ENCODE measurements at regions of chr21 and their contacts with region 1.

Region 1: GRCh38 chr21:44817506-44817880 is 369 bp downstream of the SUMO3 start:
- DNase-seq: peak; percentile 85 to 96 (median 91)
- ATAC-seq: peak; percentile 92
- H3K4me3 ChIP-seq: peak overlapping the region; percentile 46 to 58
- H3K4me3 Mint-ChIP-seq: peak overlapping the region; percentile 69
- H3K27ac ChIP-seq: peak overlapping the region in 1 of 2 experiments; percentile 76
- H3K27ac Mint-ChIP-seq: no peak overlapping the region
- H3K4me1 ChIP-seq: peaks cover 18% of the 10 kb centered on the region
- H3K4me1 Mint-ChIP-seq: peaks cover 9% of the 10 kb centered on the region
- H3K27me3 ChIP-seq: no peaks in the 10 kb centered on the region
- H3K27me3 Mint-ChIP-seq: no peaks in the 10 kb centered on the region
- CTCF ChIP-seq: no peak

Region 2: GRCh38 chr21:42973991-42974831 is 1843.3 kb before region 1 on chr21 and contains the start of gene PKNOX1:
- CTCF ChIA-PET with region 1: no interaction called
- POLR2A ChIA-PET with region 1: no interaction called
- intact Hi-C with region 1: loop called in 1 of 2 experiments (anchors 5 kb)
- DNase-seq: peak; percentile 98 to 100 (median 99)
- ATAC-seq: peak; percentile 85
- H3K4me3 ChIP-seq: peak within 1 kb of the TSS; percentile 83 to 87
- H3K4me3 Mint-ChIP-seq: peak within 1 kb of the TSS; percentile 91
- H3K27ac ChIP-seq: peak within 1 kb of the TSS; percentile 81 to 98
- H3K27ac Mint-ChIP-seq: peak within 1 kb of the TSS; percentile 94
- H3K4me1 ChIP-seq: peaks cover 18% of the 10 kb centered on the region
- H3K4me1 Mint-ChIP-seq: peaks cover 22% of the 10 kb centered on the region
- H3K27me3 ChIP-seq: no peaks in the 10 kb centered on the region
- H3K27me3 Mint-ChIP-seq: no peaks in the 10 kb centered on the region
- CTCF ChIP-seq: no peak
- total RNA-seq, gene PKNOX1: 10.3 to 11.1 TPM

Region 3: GRCh38 chr21:44338971-44339910 is 478.3 kb before region 1 on chr21 and contains the start of gene CFAP410:
- CTCF ChIA-PET with region 1: interaction called, 3 read pairs
- POLR2A ChIA-PET with region 1: no interaction called
- intact Hi-C with region 1: loop called (anchors 1 to 5 kb)
- DNase-seq: peak; percentile 89 to 98 (median 95)
- ATAC-seq: peak; percentile 84
- H3K4me3 ChIP-seq: peak within 1 kb of the TSS; percentile 73 to 76
- H3K4me3 Mint-ChIP-seq: peak within 1 kb of the TSS; percentile 94
- H3K27ac ChIP-seq: peak within 1 kb of the TSS; percentile 92 to 96
- H3K27ac Mint-ChIP-seq: peak within 1 kb of the TSS; percentile 99
- H3K4me1 ChIP-seq: peaks cover 17% of the 10 kb centered on the region
- H3K4me1 Mint-ChIP-seq: peaks cover 32% of the 10 kb centered on the region
- H3K27me3 ChIP-seq: no peaks in the 10 kb centered on the region
- H3K27me3 Mint-ChIP-seq: no peaks in the 10 kb centered on the region
- CTCF ChIP-seq: no peak
- total RNA-seq, gene CFAP410: 69.7 to 70.5 TPM

Region 4: GRCh38 chr21:44801468-44802395 is 15.8 kb before region 1 on chr21 and contains the start of gene UBE2G2:
- CTCF ChIA-PET with region 1: interaction called, 8 read pairs
- POLR2A ChIA-PET with region 1: interaction called, 3 read pairs
- intact Hi-C with region 1: loop called (anchors 1 kb)
- DNase-seq: peak; percentile 70 to 91 (median 85)
- ATAC-seq: peak; percentile 88
- H3K4me3 ChIP-seq: peak within 1 kb of the TSS; percentile 76 to 95
- H3K4me3 Mint-ChIP-seq: peak within 1 kb of the TSS; percentile 95
- H3K27ac ChIP-seq: peak within 1 kb of the TSS; percentile 64 to 71
- H3K27ac Mint-ChIP-seq: peak within 1 kb of the TSS; percentile 92
- H3K4me1 ChIP-seq: peaks cover 20% of the 10 kb centered on the region
- H3K4me1 Mint-ChIP-seq: peaks cover 47% of the 10 kb centered on the region
- H3K27me3 ChIP-seq: no peaks in the 10 kb centered on the region
- H3K27me3 Mint-ChIP-seq: no peaks in the 10 kb centered on the region
- CTCF ChIP-seq: peak; percentile 52
- total RNA-seq, gene UBE2G2: 88.8 to 89.1 TPM

Region 5: DNA sequence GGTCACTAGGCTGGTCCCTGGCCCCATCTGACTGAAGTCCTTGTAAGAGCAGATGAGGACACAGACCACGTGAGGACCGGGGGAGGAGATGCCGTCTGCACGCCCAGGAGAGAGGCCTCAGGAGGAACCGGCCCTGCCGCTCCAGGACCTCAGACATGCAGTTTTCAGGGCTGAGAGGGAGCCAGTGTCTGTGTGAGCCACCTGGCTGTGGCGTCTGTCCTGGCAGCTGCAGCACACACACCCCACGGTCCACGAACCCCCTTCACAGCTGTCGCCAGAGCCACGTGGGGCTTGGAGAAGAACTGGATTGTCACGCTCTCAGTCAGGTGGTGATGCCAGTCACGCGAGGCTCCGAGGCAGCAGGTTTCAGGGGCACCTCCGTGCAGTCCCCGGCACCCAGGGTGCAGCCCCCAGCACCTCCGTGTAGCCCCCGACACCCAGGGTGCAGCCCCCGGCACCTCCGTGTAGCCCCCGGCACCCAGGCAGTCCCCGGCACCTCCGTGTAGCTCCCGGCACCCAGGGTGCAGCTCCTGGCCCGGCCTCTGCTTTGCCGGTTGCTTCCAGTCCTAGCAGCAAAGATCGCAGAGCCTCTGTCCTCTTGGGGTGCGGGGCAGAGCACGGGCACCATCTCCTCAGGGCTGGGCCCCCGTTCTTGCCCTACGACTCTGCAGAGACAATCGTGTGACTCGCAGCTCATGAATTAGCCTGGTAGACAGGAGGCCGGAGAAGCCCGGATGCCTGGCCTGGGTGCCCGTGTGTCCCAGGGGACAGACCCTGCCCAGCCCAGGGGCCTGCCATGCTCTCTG is 19.4 kb after region 1 on chr21:
- CTCF ChIA-PET with region 1: no interaction called
- POLR2A ChIA-PET with region 1: no interaction called
- intact Hi-C with region 1: no loop called
- DNase-seq: no peak
- ATAC-seq: no peak
- H3K4me3 ChIP-seq: no peak overlapping the region
- H3K4me3 Mint-ChIP-seq: no peak overlapping the region
- H3K27ac ChIP-seq: no peak overlapping the region
- H3K27ac Mint-ChIP-seq: no peak overlapping the region
- H3K4me1 ChIP-seq: no peaks in the 10 kb centered on the region
- H3K4me1 Mint-ChIP-seq: no peaks in the 10 kb centered on the region
- H3K27me3 ChIP-seq: peaks cover 0 to 4% of the 10 kb centered on the region in 2 experiments
- H3K27me3 Mint-ChIP-seq: peaks cover 2% of the 10 kb centered on the region
- CTCF ChIP-seq: no peak

Region 6: DNA sequence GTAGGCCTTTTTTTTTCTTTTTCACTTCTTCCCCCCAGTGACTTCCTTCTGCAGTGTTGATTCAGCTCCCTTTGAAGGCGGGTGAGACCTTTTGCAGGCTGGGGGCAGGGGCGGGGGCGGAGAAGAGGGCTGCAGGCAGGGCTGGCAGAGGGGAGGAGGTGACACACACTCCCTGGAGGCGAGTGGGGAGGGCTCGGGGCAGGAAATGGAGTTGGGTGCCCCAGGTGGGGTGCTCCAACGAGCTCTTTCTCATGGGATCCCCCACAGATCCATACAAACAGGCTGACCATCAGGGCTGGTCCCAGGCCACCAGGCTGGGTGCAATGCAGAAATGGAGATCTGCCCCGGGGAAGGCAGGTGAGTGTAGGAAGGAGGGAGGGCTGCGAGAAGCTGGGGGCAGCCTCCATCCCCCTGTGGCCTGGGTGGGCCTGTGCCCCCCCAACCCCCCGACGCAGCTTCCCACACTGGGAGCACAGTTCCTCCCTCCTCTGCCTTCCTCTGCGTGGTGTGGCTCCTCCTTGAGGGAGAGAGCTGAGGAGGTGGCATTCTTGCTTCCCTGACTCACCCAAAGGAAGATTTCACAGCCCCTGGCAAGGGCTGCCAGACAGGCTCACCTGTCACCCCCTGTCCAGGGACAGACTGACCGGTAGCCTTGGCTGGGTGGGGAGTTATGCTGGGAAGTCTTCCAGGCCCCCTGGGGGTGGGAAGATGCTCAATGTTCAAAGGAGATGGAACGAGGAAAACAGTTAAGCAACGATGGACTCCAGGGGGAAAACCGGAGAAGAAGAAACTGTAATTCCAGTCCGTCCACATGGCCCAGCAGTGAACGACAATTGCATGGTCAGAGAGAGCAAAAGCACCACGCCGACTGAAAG is 110.3 kb after region 1 on chr21:
- CTCF ChIA-PET with region 1: no interaction called
- POLR2A ChIA-PET with region 1: interaction called, 3 read pairs
- intact Hi-C with region 1: loop called in 1 of 2 experiments (anchors 5 kb)
- DNase-seq: peak; percentile 59 to 96 (median 90)
- ATAC-seq: peak; percentile 78
- H3K4me3 ChIP-seq: peak overlapping the region; percentile 68 to 92
- H3K4me3 Mint-ChIP-seq: peak overlapping the region; percentile 91
- H3K27ac ChIP-seq: peak overlapping the region; percentile 75 to 79
- H3K27ac Mint-ChIP-seq: peak overlapping the region; percentile 96
- H3K4me1 ChIP-seq: peaks cover 82% of the 10 kb centered on the region
- H3K4me1 Mint-ChIP-seq: peaks cover 76% of the 10 kb centered on the region
- H3K27me3 ChIP-seq: no peaks in the 10 kb centered on the region
- H3K27me3 Mint-ChIP-seq: no peaks in the 10 kb centered on the region
- CTCF ChIP-seq: no peak

Region 7: DNA sequence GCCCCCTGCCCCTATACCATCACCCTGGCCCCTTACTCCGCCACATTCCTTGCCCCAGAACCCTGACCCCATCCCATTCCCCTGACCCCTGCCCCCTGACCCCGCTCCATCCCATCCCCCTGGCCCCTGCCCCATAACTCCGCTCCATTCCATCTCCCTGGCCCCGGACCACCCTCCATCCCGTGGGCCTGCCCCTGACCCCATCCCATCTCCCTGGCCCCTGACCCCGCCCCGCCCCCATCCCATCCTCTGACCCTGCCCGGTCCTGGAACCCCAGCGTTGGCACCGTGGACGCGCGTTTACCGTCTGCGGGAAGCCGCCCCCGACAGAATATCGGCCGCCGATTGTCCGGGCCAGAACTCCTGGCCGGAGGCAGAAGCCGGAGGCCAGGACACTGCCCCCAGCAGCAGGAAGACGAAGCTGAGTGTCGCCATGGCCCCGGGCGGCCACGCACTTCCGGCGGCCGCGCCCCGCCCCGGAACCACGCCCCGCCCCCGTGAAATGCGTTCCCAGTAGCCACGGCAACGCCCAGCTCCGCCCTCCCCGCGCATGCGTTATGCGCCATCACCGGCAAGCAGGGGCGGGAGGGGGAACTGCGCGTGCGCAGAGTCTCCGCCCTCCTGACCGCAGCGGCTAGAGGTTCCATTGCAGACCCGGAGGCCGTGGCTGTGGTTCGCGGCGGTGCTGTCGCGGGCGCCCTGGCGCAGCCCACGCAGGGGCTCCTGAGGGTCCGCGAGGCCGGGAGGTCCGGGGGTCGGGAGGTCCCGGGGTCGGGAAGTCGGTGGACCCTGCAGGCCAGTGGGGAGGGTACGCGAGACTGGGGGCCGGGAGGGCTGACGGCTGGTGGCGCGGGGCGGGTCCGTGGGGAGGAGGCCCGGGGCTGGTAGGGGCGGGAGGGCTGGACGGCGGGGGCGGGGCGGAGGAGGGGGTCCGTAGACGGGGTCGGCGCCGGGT is 470.2 kb after region 1 on chr21 and contains the start of gene POFUT2:
- CTCF ChIA-PET with region 1: no interaction called
- POLR2A ChIA-PET with region 1: no interaction called
- intact Hi-C with region 1: loop called in 1 of 2 experiments (anchors 5 kb)
- DNase-seq: peak; percentile 94 to 100 (median 99)
- ATAC-seq: peak; percentile 85
- H3K4me3 ChIP-seq: peak within 1 kb of the TSS; percentile 70 to 83
- H3K4me3 Mint-ChIP-seq: peak within 1 kb of the TSS; percentile 85
- H3K27ac ChIP-seq: peak within 1 kb of the TSS; percentile 80 to 83
- H3K27ac Mint-ChIP-seq: peak within 1 kb of the TSS; percentile 81
- H3K4me1 ChIP-seq: peaks cover 18% of the 10 kb centered on the region
- H3K4me1 Mint-ChIP-seq: peaks cover 26% of the 10 kb centered on the region
- H3K27me3 ChIP-seq: no peaks in the 10 kb centered on the region
- H3K27me3 Mint-ChIP-seq: no peaks in the 10 kb centered on the region
- CTCF ChIP-seq: no peak
- total RNA-seq, gene POFUT2: 54.7 to 56.7 TPM

Region 8: GRCh38 chr21:45643021-45643980 is 825.8 kb after region 1 on chr21 and contains the start of gene PCBP3:
- CTCF ChIA-PET with region 1: no interaction called
- POLR2A ChIA-PET with region 1: no interaction called
- intact Hi-C with region 1: loop called in 1 of 2 experiments (anchors 5 kb)
- DNase-seq: peak; percentile 86 to 95 (median 88)
- ATAC-seq: peak; percentile 82
- H3K4me3 ChIP-seq: no peak within 1 kb of the TSS
- H3K4me3 Mint-ChIP-seq: peak within 1 kb of the TSS; percentile 77
- H3K27ac ChIP-seq: no peak within 1 kb of the TSS
- H3K27ac Mint-ChIP-seq: peak within 1 kb of the TSS; percentile 37
- H3K4me1 ChIP-seq: peaks cover 21% of the 10 kb centered on the region
- H3K4me1 Mint-ChIP-seq: peaks cover 33% of the 10 kb centered on the region
- H3K27me3 ChIP-seq: peaks cover 15 to 20% of the 10 kb centered on the region in 2 experiments
- H3K27me3 Mint-ChIP-seq: peaks cover 27% of the 10 kb centered on the region
- CTCF ChIP-seq: no peak
- total RNA-seq, gene PCBP3: 1.3 to 2.4 TPM